ENCODE measurements at regions of chr19 and their contacts with region 1.

Region 1: DNA sequence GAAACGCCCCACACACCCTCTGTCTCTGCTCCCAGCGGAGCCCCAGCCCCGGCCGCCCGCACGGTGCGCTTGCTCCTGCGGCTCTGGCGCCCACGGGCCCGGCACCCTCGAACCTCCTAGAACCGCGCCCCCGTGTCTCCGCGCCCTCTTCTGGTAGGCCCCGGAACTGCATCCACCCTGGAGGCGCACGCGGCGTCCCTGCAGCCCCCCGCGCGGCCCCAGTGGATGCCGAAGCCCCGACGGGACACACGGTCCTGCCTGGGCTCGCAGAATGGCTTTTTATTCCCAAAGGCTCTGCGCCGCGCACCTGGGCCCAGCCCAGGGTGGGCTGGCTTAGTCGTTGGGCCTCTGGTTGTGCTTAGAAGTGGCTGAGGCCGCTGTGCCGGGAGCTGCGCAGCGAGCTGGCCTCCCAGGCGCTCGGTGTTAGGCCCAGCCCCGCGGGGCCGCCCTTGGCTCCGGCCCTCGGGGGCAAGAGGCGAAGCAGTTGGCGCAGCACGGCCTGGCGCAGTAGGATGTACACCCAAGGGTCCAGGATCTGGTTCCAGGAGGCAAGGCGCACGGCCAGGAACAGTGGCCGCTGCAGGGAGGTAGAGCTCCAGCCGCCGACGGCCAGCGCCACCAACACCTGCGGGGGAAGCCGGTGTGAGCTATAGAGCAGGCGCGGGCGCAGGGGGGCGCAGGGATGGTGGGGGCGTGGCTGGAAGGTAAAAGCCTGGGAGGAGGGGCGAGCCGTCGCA is 2.8 kb downstream of the PTGER1 start:
- DNase-seq: peak; percentile 67 to 83
- ATAC-seq: peak; percentile 53 to 68 (median 65)
- H3K4me3 ChIP-seq: peak overlapping the region in 8 of 10 donors; percentile 5 to 39 (median 24)
- H3K27ac ChIP-seq: no peak overlapping the region
- H3K4me1 ChIP-seq: peaks cover 11 to 47% (median 31%) of the 10 kb centered on the region in 9 donors
- H3K27me3 ChIP-seq: peaks cover 4 to 39% (median 31%) of the 10 kb centered on the region in 7 donors
- CTCF ChIP-seq: peak; percentile 96 to 99 (median 98)

Region 2: DNA sequence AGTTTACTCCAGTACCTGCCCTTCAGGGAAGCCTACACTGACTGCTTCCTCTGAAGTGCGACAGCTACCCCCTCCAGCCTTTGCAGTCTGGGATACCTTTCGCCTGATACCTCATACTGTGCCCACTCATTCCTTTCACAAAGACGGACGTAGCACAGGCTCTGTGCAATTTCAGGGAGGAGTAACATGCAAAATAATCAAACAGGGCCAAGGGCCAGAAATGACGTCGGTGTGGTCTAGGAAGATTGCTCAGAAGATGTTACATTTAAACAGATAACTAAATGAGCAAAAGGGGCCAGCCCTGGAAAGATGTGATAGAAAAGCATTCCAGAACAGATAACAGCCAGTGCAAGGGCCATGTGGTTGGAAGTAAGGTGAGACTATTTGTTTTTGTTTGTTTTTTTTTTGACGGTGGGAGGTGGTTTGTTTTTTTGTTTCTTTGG is 46.7 kb before region 1 on chr19:
- intact Hi-C with region 1: loop called in 2 of 10 experiments (anchors 5 kb)
- DNase-seq: no peak
- ATAC-seq: no peak
- H3K4me3 ChIP-seq: no peak overlapping the region
- H3K27ac ChIP-seq: no peak overlapping the region
- H3K4me1 ChIP-seq: peaks cover 0 to 16% (median 0%) of the 10 kb centered on the region in 9 donors
- H3K27me3 ChIP-seq: no peaks in the 10 kb centered on the region
- CTCF ChIP-seq: no peak

Region 3: DNA sequence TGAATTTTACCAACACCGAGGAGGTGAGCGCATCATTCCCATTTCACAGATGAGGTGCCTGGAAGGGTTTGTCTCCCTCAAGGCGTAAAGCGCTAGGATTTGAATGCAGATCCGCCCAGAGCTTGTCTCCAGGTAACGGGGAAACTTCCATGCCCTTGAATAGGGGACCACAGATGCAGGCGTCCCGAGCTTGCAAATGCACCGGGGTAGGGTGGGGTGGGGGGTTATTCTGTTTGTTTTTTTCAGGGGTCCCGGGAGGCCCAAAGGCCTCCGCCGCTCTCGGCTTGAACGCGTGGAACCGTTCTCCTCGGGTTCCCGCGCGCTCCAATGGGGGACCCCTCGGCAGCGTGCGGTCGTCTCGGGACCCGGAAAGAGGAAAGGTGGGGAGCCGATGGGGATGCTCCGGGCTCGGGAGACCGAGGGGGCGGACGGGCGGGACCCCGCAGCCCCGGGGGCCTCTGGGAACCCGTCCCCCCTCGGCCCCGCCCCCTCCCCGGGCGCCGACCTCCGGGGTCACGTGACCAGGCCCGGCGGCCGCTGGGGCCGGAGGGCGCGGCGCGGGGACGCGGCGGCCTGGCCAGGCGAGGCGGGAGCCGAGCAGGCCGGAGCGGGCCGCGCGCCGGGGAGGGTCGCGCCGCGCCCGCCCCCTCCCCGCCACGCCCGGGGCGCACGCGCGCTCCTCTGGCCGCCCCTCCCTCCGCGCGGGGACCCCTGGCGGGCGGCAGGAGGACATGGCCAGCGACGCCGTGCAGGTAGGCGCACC is 39.4 kb before region 1 on chr19 and contains the start of gene PKN1:
- intact Hi-C with region 1: loop called in 4 of 10 experiments (anchors 5 kb)
- DNase-seq: peak; percentile 68 to 80
- ATAC-seq: peak; percentile 28 to 78 (median 52)
- H3K4me3 ChIP-seq: peak within 1 kb of the TSS; percentile 77 to 99 (median 93)
- H3K27ac ChIP-seq: peak within 1 kb of the TSS; percentile 92 to 98 (median 96)
- H3K4me1 ChIP-seq: peaks cover 3 to 54% (median 48%) of the 10 kb centered on the region in 9 donors
- H3K27me3 ChIP-seq: no peaks in the 10 kb centered on the region
- CTCF ChIP-seq: no peak
- total RNA-seq, gene PKN1: 85.2 to 176 (median 126) TPM